ENCODE measurements at regions of chr15 and their contacts with region 1.

Region 1: DNA sequence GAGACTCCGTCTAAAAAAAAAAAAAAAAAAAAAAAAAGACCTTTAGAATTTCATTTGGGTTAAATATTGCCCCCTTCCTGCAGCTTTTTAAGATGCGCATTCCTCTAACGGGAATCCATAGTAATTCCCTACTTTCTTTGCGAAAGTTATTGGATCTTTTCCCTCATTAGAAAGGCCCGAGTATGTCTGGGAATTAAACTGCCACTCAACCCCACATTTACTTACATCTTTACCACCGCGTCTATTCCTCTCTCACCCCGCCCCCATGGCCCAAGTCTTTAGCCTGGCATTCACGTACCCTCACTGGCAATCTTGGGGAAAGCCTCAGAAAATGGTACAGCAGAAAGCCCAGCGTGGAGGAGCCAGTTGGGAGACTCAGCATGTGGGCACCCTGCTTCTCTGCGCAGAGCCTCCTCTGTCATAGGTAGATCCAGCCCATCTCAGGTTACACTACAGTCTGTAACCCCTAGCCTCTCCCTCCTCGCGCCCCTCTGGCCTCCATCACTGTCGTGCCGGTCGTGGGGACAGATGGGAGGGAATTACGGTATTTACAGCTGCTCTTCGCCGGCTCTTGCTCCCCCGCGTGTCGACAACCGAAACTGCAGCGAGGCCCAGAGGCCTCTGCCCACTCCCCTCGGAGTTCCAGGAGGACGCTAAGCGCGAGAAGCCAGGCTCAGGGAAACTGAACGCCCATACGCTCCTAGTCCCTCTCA is 6.4 kb upstream of the ANKDD1A start:
- DNase-seq: peak; percentile 93 to 96
- H3K4me3 ChIP-seq: peak overlapping the region; percentile 22 to 59 (median 42); a peak in 7 of 8 replicates
- H3K27ac ChIP-seq: peak overlapping the region; percentile 48; the same call in 1 of the 2 replicates
- H3K4me1 ChIP-seq: peaks cover 0 to 8% (median 3%) of the 10 kb centered on the region in 4 experiments; a peak in 5 of 7 replicates
- H3K27me3 ChIP-seq: no peaks in the 10 kb centered on the region
- CTCF ChIP-seq: peak; percentile 81 to 88 (median 85)
- EP300 ChIP-seq: no peak
- POLR2A ChIP-seq: no peak; a peak in 1 of 3 replicates
- RAD21 ChIP-seq: peak; percentile 83 to 89

Region 2: GRCh38 chr15:64693134-64693533 is 212.1 kb before region 1 on chr15:
- CTCF ChIA-PET with region 1: no interaction called
- POLR2A ChIA-PET with region 1: no interaction called
- DNase-seq: no peak
- H3K4me3 ChIP-seq: no peak overlapping the region
- H3K27ac ChIP-seq: no peak overlapping the region
- H3K4me1 ChIP-seq: peaks cover 3 to 21% (median 10%) of the 10 kb centered on the region in 4 experiments; a peak in 5 of 7 replicates
- H3K27me3 ChIP-seq: peaks cover 0 to 2% (median 0%) of the 10 kb centered on the region in 4 experiments; a peak in 1 of 7 replicates
- CTCF ChIP-seq: no peak
- EP300 ChIP-seq: no peak
- POLR2A ChIP-seq: peak; percentile 22 to 57; a peak in 2 of 3 replicates
- RAD21 ChIP-seq: no peak

Region 3: DNA sequence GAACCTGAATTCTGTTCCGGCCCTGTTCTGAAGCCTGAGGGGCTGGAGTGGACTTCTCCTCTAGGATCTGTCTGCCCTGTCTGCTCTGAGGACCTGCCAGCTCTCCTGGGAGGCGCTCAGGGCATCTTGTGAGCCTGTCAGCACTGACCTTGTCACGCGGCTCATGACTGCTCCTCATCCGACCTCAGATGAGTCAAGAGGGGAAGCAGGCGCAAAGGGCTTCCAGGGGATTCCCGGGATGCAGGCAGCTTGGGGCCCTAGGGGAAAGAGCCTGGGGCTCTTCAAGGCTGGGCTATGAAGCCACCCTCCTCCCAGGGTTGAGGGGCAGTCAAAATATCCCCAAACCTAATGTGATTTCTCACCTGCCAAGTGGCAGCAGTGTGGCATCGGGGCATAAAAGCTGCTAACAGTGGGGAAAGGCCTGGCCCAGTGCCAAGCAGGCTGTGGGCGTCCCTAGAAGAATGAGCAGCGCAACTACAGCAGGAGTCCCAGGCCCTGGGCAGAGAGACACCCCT is 21.2 kb before region 1 on chr15:
- CTCF ChIA-PET with region 1: interaction called, 22 read pairs
- POLR2A ChIA-PET with region 1: no interaction called
- DNase-seq: no peak
- H3K4me3 ChIP-seq: no peak overlapping the region
- H3K27ac ChIP-seq: no peak overlapping the region
- H3K4me1 ChIP-seq: peaks cover 0 to 4% (median 0%) of the 10 kb centered on the region in 4 experiments; a peak in 2 of 7 replicates
- H3K27me3 ChIP-seq: no peaks in the 10 kb centered on the region
- CTCF ChIP-seq: no peak
- EP300 ChIP-seq: no peak
- POLR2A ChIP-seq: no peak
- RAD21 ChIP-seq: no peak

Region 4: DNA sequence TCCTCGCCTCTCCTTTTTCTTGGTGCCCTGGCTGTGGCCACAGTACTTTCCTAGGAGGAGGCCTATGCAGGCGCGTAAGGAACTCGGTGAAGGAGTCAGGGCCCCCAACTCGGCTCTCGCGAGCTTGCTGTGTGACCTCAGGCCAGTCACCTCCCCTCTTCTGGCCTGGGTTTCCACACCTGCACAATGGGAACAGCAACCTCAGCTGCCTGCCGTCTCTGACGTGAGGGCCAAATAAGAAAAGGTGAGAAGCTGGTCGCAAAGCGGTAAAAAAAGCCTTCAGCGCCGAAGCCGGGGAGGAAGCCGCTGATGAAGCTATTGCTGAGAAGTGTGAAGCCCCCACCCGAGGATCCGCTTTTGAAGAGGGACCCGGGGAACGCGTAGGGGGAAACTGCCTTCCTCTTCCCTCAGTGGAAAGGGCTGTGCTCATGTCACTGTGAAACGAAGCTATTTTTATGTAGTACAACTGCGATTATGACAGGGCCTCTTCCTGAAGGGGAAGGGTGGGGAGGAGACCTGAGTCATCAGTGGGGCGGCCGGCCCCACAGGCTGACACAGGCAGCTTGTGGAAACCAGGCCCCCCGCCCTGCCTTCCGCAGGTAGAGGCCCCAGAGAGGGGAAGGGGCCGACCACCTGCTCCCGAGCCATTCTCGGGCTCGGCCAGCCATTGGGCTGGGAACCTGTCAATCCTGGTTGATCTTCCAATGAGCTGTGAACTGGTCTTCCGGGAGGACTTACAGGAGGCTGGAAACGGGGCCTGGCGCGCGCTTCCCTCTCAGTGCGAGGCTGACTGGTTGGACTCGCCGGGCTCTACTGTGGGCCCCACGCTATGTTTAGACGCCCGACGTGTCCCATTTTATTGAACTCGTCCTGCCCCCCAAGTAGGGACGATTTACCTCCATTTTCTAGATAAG is 11.5 kb before region 1 on chr15:
- CTCF ChIA-PET with region 1: interaction called, 12 read pairs
- POLR2A ChIA-PET with region 1: interaction called, 16 read pairs
- DNase-seq: peak; percentile 96
- H3K4me3 ChIP-seq: peak overlapping the region; percentile 21 to 62 (median 37); a peak in 6 of 8 replicates
- H3K27ac ChIP-seq: no peak overlapping the region; the same call in 1 of the 2 replicates
- H3K4me1 ChIP-seq: peaks cover 7 to 26% (median 14%) of the 10 kb centered on the region in 4 experiments; a peak in 6 of 7 replicates
- H3K27me3 ChIP-seq: no peaks in the 10 kb centered on the region
- CTCF ChIP-seq: no peak
- EP300 ChIP-seq: no peak
- POLR2A ChIP-seq: no peak
- RAD21 ChIP-seq: no peak

Region 5: DNA sequence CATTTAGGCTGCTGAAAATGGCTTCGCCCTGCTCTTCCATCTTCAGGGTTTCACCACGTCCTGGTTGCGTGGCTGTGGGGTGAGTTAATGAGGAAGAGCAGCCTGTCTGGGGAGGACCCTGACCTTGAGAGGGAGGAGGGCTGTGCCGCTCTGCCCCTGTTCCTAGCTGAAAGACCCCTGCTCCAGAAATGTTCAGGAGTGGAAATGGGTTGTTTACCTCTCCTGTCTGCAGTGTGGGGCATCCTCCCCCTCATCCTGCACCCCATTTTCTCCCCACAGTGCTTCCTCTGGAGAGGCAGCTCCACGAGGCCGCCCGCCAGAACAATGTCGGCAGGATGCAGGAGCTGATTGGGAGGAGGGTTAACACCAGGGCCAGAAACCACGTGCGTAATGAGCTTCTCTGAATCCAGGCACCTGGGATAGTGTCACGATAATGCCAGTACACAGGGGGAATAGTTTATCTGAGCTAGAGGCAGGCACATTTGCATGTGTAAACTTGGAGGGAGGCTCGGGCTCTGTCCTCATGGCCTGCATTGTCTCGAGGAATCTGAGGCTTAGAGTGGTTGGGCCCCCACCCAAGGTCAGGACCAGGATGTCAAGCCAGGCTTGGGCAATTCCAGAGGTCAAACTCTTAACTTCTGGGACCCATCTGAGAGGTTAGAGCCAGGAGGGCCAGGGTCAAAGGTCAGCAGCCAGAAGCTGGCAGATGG is 10.4 kb after region 1 on chr15:
- CTCF ChIA-PET with region 1: interaction called, 3 read pairs
- POLR2A ChIA-PET with region 1: interaction called, 10 read pairs
- DNase-seq: no peak
- H3K4me3 ChIP-seq: no peak overlapping the region
- H3K27ac ChIP-seq: no peak overlapping the region
- H3K4me1 ChIP-seq: peaks cover 0 to 16% (median 10%) of the 10 kb centered on the region in 4 experiments; a peak in 6 of 7 replicates
- H3K27me3 ChIP-seq: peaks cover 0 to 13% (median 12%) of the 10 kb centered on the region in 4 experiments; a peak in 6 of 7 replicates
- CTCF ChIP-seq: no peak
- EP300 ChIP-seq: no peak
- POLR2A ChIP-seq: no peak
- RAD21 ChIP-seq: no peak

Region 6: GRCh38 chr15:65028921-65029735 is 123.9 kb after region 1 on chr15 and contains the start of gene MTFMT:
- CTCF ChIA-PET with region 1: no interaction called
- POLR2A ChIA-PET with region 1: no interaction called
- DNase-seq: peak in 1 of 2 experiments; percentile 98
- H3K4me3 ChIP-seq: peak within 1 kb of the TSS; percentile 75 to 93 (median 88)
- H3K27ac ChIP-seq: no peak within 1 kb of the TSS; the same call in 1 of the 2 replicates
- H3K4me1 ChIP-seq: peaks cover 0 to 2% (median 0%) of the 10 kb centered on the region in 4 experiments; a peak in 1 of 7 replicates
- H3K27me3 ChIP-seq: no peaks in the 10 kb centered on the region
- CTCF ChIP-seq: no peak; a peak in 1 of 4 replicates
- EP300 ChIP-seq: no peak
- POLR2A ChIP-seq: peak; percentile 89 to 90
- RAD21 ChIP-seq: no peak; a peak in 1 of 4 replicates
- total RNA-seq, gene MTFMT: 16.5 and 20.8 TPM in 2 replicates

Region 7: GRCh38 chr15:65156692-65157091 is 251.4 kb after region 1 on chr15:
- CTCF ChIA-PET with region 1: no interaction called
- POLR2A ChIA-PET with region 1: no interaction called
- DNase-seq: no peak
- H3K4me3 ChIP-seq: no peak overlapping the region
- H3K27ac ChIP-seq: no peak overlapping the region
- H3K4me1 ChIP-seq: no peaks in the 10 kb centered on the region
- H3K27me3 ChIP-seq: no peaks in the 10 kb centered on the region
- CTCF ChIP-seq: no peak
- EP300 ChIP-seq: no peak
- POLR2A ChIP-seq: no peak
- RAD21 ChIP-seq: no peak

Measured in H1 (cell line).